AG04450 (cell line): ENCODE measurements at regions of chr5 and their contacts with region 1.

Region 1: DNA sequence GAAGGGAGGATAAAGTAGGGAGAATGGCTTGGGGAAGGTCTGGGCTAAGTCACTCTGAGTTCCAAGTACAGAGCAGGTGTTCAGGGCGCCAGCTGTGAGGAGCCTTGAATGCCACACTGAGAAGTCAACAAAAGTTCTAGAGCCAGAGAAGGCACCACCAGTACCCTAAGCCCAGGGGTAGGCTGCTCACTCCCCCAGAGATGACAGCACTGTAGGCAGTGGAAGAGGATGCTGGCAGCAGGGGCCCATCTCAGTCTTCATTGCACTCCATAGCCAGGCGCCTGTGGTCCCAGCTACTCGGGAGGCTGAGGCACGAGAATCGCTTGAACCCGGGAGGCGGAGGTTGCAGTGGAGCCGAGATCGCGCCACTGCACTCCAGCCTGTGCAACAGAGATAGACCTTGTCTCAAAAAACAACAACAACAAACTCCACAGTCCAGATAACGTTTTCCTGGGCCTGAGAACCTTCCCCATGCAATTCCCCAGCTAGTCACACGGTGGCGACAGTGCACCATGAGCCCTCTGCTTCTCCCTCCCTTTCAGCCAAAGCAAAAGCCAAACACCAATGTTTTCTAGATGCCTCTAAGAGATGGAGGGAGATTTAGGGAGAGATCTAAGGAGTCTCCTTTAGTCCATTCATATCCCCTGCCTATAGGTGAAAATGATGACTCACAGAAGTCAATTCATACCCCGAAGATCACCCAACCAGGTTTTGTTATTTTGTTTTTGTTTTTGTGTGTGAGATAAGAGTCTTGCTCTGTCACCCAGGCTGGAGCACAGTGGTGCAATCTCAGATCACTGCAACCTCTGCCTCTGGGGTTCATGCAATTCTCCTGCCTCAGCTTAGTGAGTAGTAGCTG is 19.8 kb upstream of the NSD1 start:
- DNase-seq: no peak
- H3K4me3 ChIP-seq: no peak overlapping the region
- H3K27ac ChIP-seq: no peak overlapping the region
- H3K27me3 ChIP-seq: no peaks in the 10 kb centered on the region
- CTCF ChIP-seq: peak; percentile 100

Region 2: DNA sequence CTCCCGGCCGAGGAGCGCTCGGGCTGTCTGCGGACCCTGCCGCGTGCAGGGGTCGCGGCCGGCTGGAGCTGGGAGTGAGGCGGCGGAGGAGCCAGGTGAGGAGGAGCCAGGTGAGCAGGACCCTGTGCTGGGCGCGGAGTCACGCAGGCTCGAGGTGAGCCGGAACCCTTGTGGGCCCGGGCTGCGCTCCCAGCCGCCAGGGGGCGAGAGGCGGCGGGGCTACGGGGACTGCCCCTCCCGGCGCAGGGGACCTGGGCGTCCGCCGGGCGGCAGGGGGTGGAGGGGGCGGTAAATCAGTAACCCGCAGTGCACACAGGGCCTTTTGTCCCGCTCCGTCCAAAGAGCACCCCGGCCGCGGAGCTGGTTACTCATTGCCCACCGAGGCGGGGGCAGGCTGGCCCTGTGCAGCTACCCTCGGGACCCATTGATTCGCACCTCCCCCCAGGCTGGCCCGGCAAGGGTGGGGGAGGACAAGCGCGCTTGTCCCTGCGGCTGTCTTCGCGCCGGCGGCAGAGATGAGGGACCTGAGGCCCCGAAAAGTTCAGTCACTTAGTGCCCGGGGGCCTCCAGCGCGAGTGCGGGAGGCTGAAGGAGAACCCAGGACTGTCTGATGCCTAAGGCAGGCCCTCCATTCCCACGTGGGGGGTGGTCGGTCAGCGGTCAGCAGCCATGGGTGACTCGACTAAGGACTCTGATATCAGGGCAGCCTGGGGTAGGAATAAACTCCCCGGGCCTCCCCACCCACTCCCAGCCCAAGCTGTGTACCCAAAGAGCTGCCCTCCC is 26.7 kb before region 1 on chr5:
- CTCF ChIA-PET with region 1: interaction called, 35 read pairs
- POLR2A ChIA-PET with region 1: no interaction called
- DNase-seq: no peak
- H3K4me3 ChIP-seq: peak overlapping the region; percentile 56
- H3K27ac ChIP-seq: no peak overlapping the region
- H3K27me3 ChIP-seq: peaks cover 15% of the 10 kb centered on the region
- CTCF ChIP-seq: peak; percentile 45

Region 3: GRCh38 chr5:177194274-177194673 is 80.5 kb after region 1 on chr5:
- CTCF ChIA-PET with region 1: no interaction called
- POLR2A ChIA-PET with region 1: no interaction called
- DNase-seq: peak; percentile 66
- H3K4me3 ChIP-seq: no peak overlapping the region
- H3K27ac ChIP-seq: peak overlapping the region; percentile 39
- H3K27me3 ChIP-seq: no peaks in the 10 kb centered on the region
- CTCF ChIP-seq: no peak

Region 4: GRCh38 chr5:177209610-177210009 is 95.8 kb after region 1 on chr5:
- CTCF ChIA-PET with region 1: no interaction called
- POLR2A ChIA-PET with region 1: no interaction called
- DNase-seq: no peak
- H3K4me3 ChIP-seq: no peak overlapping the region
- H3K27ac ChIP-seq: no peak overlapping the region
- H3K27me3 ChIP-seq: no peaks in the 10 kb centered on the region
- CTCF ChIP-seq: no peak

Region 5: DNA sequence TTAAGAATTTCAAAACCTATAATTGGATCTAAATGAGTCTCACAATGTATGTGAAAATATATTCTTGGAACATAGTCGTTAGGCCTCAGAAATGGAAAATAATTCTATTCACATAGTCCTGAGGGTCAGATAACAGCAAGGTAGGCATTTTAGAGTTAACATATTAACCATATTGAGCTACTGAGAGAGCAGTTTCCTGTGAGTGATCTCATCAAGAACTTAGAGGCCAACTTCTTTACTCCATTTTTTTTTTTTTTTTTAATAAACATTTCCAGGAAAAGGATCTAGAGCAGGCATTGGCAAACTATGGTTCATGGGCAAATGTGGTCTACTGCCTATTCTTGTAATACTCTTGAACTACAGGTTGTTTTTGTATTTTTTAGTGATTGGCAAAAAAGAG is 163.1 kb after region 1 on chr5:
- CTCF ChIA-PET with region 1: interaction called, 18 read pairs
- POLR2A ChIA-PET with region 1: no interaction called
- DNase-seq: no peak
- H3K4me3 ChIP-seq: no peak overlapping the region
- H3K27ac ChIP-seq: no peak overlapping the region
- H3K27me3 ChIP-seq: no peaks in the 10 kb centered on the region
- CTCF ChIP-seq: no peak

Region 6: GRCh38 chr5:177309351-177310191 is 195.8 kb after region 1 on chr5:
- CTCF ChIA-PET with region 1: interaction called, 35 read pairs
- POLR2A ChIA-PET with region 1: no interaction called
- DNase-seq: no peak
- H3K4me3 ChIP-seq: no peak overlapping the region
- H3K27ac ChIP-seq: no peak overlapping the region
- H3K27me3 ChIP-seq: no peaks in the 10 kb centered on the region
- CTCF ChIP-seq: peak; percentile 86